ENCODE measurements at regions of chr2 and their contacts with region 1.

Region 1: GRCh38 chr2:62231541-62231940 is 35.6 kb downstream of the B3GNT2 start:
- DNase-seq: no peak
- ATAC-seq: peak; percentile 44 to 88

Region 2: DNA sequence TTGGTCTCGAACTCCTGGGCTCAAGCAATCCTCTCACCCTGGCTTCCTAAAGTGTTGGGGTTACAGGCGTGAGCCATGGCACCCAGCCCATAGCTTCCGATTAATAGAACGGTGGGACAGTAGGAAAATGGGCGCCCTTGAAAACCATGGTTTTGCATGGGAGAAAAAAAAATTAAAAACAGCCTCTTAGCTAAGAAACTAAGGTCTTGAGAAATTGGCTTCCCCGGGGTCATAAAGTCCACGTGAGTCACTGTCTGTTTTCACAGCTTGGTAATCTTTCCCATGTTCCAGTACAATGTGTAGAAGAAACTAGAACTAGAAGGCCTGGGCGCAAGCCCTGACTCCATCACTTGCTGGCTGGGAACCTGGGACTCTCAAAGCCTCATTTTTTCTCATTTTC is 14.9 kb before region 1 on chr2:
- intact Hi-C with region 1: loop called in 1 of 2 experiments (anchors 1 kb)
- DNase-seq: peak; percentile 62
- ATAC-seq: peak; percentile 56 to 76

Region 3: DNA sequence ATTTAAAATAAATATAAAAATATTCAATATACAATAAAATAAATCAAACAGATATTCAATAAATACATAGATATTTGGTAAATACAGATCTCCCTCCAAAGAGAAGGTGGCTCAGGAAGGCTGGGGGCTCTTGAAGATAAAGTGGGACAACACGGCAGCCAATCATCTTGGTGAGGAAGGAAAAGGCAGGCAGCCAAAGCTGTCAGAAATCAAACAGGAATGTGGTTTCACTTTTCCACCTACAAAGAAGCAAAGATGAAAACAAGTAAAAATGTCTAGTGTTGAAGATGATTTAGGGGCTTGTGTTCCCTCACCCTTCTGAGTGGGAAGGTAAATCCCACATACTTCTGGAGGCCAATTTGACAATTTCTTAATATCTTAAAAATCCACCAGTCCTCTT is 50.1 kb after region 1 on chr2:
- intact Hi-C with region 1: loop called in 1 of 2 experiments (anchors 2 kb)
- DNase-seq: no peak
- ATAC-seq: no peak

Region 4: DNA sequence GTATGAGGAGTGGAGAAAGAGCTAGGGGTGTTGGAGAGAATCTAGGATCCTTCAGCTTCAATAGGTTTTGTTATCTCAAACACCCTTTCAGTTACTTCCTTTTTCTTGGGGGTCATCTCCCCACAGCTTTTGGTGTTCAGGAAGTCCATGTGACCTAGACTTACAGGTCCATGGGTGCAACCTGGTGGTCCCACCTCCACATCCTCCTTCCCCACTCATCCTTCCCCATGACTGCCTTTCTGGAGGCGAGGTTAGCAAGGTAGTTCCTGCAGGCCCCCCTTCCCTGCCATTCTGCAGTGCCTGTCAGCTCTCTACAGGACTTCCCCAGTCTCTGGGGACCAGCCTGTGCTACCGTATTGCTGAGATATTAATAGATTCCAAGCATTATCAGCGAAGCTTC is 166.8 kb after region 1 on chr2:
- intact Hi-C with region 1: no loop called
- DNase-seq: no peak
- ATAC-seq: no peak

Measured in left cardiac atrium (tissue), 4 donors.